PC-3 (cell line): ENCODE measurements at regions of chr7 and their contacts with region 1.

Region 1: GRCh38 chr7:81410471-81411125 is 359.2 kb downstream of the HGF start:
- DNase-seq: peak; percentile 94
- ATAC-seq: peak; percentile 60
- H3K4me3 ChIP-seq: peak overlapping the region; percentile 24
- H3K27ac ChIP-seq: peak overlapping the region; percentile 89
- H3K4me1 ChIP-seq: peaks cover 64% of the 10 kb centered on the region
- H3K27me3 ChIP-seq: no peaks in the 10 kb centered on the region
- CTCF ChIP-seq: no peak

Region 2: GRCh38 chr7:81159387-81159786 is 251.2 kb before region 1 on chr7:
- CTCF ChIA-PET with region 1: no interaction called
- POLR2A ChIA-PET with region 1: no interaction called
- intact Hi-C with region 1: loop called (anchors 2 kb)
- DNase-seq: peak; percentile 84
- ATAC-seq: peak; percentile 67
- H3K4me3 ChIP-seq: no peak overlapping the region
- H3K27ac ChIP-seq: peak overlapping the region; percentile 64
- H3K4me1 ChIP-seq: peaks cover 27% of the 10 kb centered on the region
- H3K27me3 ChIP-seq: no peaks in the 10 kb centered on the region
- CTCF ChIP-seq: no peak

Region 3: GRCh38 chr7:81244224-81244623 is 166.4 kb before region 1 on chr7:
- CTCF ChIA-PET with region 1: no interaction called
- POLR2A ChIA-PET with region 1: no interaction called
- intact Hi-C with region 1: loop called (anchors 5 kb)
- DNase-seq: peak; percentile 16
- ATAC-seq: no peak
- H3K4me3 ChIP-seq: no peak overlapping the region
- H3K27ac ChIP-seq: no peak overlapping the region
- H3K4me1 ChIP-seq: peaks cover 12% of the 10 kb centered on the region
- H3K27me3 ChIP-seq: no peaks in the 10 kb centered on the region
- CTCF ChIP-seq: peak; percentile 43; the same call in 1 of the 2 replicates

Region 4: DNA sequence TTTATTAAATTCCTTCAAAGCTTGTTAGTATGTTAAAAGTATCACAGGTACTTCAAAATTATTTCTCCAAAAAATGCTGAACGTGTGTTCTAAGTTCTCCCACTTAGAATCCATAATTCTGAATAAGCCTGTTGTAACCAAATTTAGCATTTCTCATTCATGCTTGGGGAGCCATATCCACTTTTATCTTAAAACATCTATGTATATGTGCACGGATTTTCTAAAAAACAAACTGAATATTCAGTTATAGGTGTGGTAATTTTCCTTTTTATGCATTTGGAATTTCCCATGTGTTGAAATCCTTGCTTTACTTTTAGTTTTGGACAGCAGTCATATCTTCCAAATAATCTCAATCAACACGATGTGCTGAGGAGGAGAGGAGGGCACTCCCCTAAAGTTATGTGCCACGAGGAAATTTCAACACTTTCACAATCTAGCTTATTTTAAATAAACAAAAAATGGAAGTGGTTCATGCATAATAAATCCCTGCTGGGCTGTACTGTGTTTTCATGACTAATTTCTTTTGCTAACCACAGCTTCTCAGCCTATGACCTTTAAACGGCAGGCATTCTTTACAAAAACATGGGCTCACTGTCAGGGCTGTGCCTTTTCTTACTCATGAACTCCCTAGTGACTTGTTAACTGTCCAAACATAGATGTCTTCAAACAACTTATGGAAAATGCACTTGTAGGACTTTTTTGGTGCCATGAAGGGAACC is 111.5 kb before region 1 on chr7:
- CTCF ChIA-PET with region 1: no interaction called
- POLR2A ChIA-PET with region 1: no interaction called
- intact Hi-C with region 1: loop called (anchors 1 kb)
- DNase-seq: peak; percentile 89
- ATAC-seq: peak; percentile 99
- H3K4me3 ChIP-seq: peak overlapping the region; percentile 8; the same call in 1 of the 2 replicates
- H3K27ac ChIP-seq: peak overlapping the region; percentile 57
- H3K4me1 ChIP-seq: peaks cover 29% of the 10 kb centered on the region
- H3K27me3 ChIP-seq: no peaks in the 10 kb centered on the region
- CTCF ChIP-seq: no peak

Region 5: DNA sequence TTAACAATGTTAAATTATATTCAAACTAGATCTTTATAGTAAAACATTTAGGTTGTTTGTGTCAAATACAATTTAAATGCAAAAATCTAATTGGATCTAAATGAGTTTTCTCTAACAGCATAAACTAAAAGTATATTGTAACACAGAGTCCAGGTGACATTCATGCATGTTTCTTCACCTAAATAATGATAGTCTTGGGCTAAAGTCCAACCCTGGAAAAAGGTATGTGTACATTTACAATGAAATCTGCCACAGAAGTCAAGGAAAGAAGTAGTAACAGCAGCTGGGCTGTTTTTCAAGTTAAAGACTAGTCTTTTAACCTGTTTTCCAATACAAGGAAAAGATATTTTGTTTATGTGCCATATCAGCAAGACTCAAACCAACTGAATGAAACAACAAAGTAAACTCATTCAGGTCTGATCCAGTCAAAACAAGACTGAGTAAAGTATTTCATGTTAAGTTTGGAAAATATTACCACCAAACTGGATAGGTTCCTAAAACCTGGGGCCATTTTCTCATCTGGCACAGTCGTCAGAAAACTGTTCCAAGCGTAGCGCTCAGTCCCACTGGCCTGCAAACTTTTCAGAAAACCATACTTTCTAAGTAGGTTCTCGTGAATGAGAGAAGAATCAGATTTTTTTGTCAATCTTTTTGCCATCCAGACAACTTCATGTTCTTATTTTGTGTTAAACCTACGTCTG is 10.1 kb after region 1 on chr7:
- CTCF ChIA-PET with region 1: no interaction called
- POLR2A ChIA-PET with region 1: no interaction called
- intact Hi-C with region 1: no loop called
- DNase-seq: no peak
- ATAC-seq: no peak
- H3K4me3 ChIP-seq: no peak overlapping the region
- H3K27ac ChIP-seq: no peak overlapping the region
- H3K4me1 ChIP-seq: peaks cover 15% of the 10 kb centered on the region
- H3K27me3 ChIP-seq: no peaks in the 10 kb centered on the region
- CTCF ChIP-seq: no peak